GM12878 (cell line): ENCODE measurements at regions of chr15 and their contacts with region 1.

Region 1: GRCh38 chr15:100947760-100948429 is 28.7 kb downstream of the LRRK1 start:
- DNase-seq: no peak
- ATAC-seq: peak; percentile 79
- H3K4me3 ChIP-seq: peak overlapping the region; percentile 42
- H3K27ac ChIP-seq: peak overlapping the region; percentile 60
- H3K4me1 ChIP-seq: peaks cover 11% of the 10 kb centered on the region
- H3K27me3 ChIP-seq: no peaks in the 10 kb centered on the region
- CTCF ChIP-seq: no peak
- EP300 ChIP-seq: no peak
- POLR2A ChIP-seq: no peak; the same call in 1 of the 2 replicates
- RAD21 ChIP-seq: no peak

Region 2: DNA sequence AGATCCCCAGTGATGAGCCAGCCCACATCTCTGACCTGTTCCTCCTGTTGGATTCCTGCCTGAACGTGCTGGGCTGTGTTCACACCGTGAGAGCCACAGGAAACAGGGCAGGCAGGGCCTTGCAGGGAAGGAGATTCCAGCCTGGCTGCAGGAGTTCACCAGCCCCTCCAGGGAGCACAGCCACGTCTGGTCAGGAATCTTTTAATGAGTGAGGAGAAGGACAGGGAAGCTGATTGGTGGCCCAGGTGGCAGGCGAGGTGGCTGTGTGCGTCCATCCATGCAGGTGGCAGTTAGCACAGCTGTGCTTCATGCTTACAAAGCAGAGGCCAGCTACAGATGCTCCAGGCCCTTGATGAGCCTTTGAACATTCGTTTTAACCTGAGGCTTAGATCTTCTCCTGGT is 18.3 kb before region 1 on chr15:
- CTCF ChIA-PET with region 1: interaction called, 39 read pairs
- POLR2A ChIA-PET with region 1: interaction called, 97 read pairs
- RAD21 ChIA-PET with region 1: interaction called, 76 read pairs
- SMC1A ChIA-PET with region 1: interaction called, 55 read pairs
- in situ Hi-C with region 1: no loop called
- intact Hi-C with region 1: no loop called
- DNase-seq: no peak
- ATAC-seq: peak; percentile 39
- H3K4me3 ChIP-seq: no peak overlapping the region
- H3K27ac ChIP-seq: peak overlapping the region; percentile 81
- H3K4me1 ChIP-seq: peaks cover 74% of the 10 kb centered on the region
- H3K27me3 ChIP-seq: no peaks in the 10 kb centered on the region
- CTCF ChIP-seq: no peak
- EP300 ChIP-seq: no peak
- POLR2A ChIP-seq: 0 out of 2 replicates have a peak, but pooled peaks have one; percentile 34
- RAD21 ChIP-seq: no peak

Region 3: GRCh38 chr15:100968050-100968966 is 20.4 kb after region 1 on chr15:
- CTCF ChIA-PET with region 1: interaction called, 10 read pairs
- POLR2A ChIA-PET with region 1: interaction called, 12 read pairs
- RAD21 ChIA-PET with region 1: interaction called, 24 read pairs
- SMC1A ChIA-PET with region 1: interaction called, 36 read pairs
- in situ Hi-C with region 1: no loop called
- intact Hi-C with region 1: loop called (anchors 1 kb)
- DNase-seq: peak; percentile 30
- ATAC-seq: peak; percentile 88
- H3K4me3 ChIP-seq: no peak overlapping the region
- H3K27ac ChIP-seq: no peak overlapping the region
- H3K4me1 ChIP-seq: peaks cover 7% of the 10 kb centered on the region
- H3K27me3 ChIP-seq: no peaks in the 10 kb centered on the region
- CTCF ChIP-seq: no peak
- EP300 ChIP-seq: no peak
- POLR2A ChIP-seq: no peak
- RAD21 ChIP-seq: no peak